CD4-positive, alpha-beta memory T cell (primary cell): ENCODE measurements at regions of chr20 and their contacts with region 1.

Region 1: DNA sequence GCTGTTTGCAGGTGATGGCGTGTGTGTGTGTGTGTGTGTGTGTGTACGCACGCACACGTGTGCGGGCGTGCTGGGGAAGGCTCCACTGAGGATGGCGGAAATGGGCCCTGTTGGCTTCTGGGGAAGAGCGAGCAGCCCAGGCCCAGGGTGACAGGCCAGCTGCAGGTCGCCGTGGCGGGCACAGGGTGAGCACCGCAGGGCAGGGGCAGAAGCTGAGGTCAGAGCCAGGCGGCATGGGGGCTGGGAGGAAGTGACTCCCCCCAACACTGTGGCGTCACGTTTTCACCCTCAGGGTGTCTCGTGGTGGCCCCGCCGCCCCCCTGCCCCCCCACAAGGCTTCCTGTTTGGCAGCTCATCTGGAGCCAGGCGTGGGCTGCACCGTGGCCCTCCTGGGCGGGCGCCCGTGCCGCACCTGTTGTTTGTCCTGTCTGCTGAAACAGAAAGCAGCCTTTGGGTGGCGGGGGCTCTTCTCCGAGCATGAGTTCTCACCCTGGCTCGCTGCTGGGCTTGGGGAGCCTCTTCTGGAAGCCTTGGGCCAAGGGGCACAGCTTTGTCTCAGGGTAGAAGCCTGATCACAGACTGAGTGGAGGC is 7.1 kb downstream of the RBM38 start:
- DNase-seq: peak; percentile 92 to 97 (median 94)
- H3K4me3 ChIP-seq: peak overlapping the region; percentile 43 to 74
- H3K4me3 Mint-ChIP-seq: peak overlapping the region; percentile 80 to 91 (median 84)
- H3K27ac ChIP-seq: peak overlapping the region; percentile 90
- H3K27ac Mint-ChIP-seq: peak overlapping the region; percentile 97 to 100 (median 99)
- H3K4me1 ChIP-seq: peaks cover 97% of the 10 kb centered on the region
- H3K4me1 Mint-ChIP-seq: peaks cover 52 to 96% (median 76%) of the 10 kb centered on the region in 4 donors
- H3K27me3 ChIP-seq: no peaks in the 10 kb centered on the region
- H3K27me3 Mint-ChIP-seq: peaks cover 0 to 3% of the 10 kb centered on the region in 2 donors

Region 2: DNA sequence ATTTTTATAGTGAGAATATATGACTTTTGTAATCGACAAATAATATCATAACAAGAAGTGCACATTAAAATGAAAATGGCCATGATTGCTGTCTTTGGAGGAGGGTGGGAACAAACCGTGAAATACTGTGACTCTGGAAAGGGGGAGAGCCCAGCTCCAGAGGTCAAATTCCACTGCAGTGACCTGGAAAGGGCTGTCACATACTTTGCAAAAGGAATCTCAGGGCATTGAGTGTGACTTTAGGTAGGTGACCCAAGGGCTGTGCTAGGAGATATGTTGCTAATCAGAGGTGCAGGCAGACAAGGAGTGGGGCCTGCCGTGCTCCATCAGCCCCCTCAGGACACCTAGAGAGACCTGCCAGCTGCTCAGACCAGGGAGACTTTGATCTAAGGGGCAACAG is 103.8 kb before region 1 on chr20:
- CTCF ChIA-PET with region 1: no interaction called
- POLR2A ChIA-PET with region 1: no interaction called
- intact Hi-C with region 1: no loop called
- DNase-seq: no peak
- H3K4me3 ChIP-seq: no peak overlapping the region
- H3K4me3 Mint-ChIP-seq: no peak overlapping the region
- H3K27ac ChIP-seq: no peak overlapping the region
- H3K27ac Mint-ChIP-seq: no peak overlapping the region
- H3K4me1 ChIP-seq: no peaks in the 10 kb centered on the region
- H3K4me1 Mint-ChIP-seq: no peaks in the 10 kb centered on the region
- H3K27me3 ChIP-seq: no peaks in the 10 kb centered on the region
- H3K27me3 Mint-ChIP-seq: peaks cover 22 to 27% of the 10 kb centered on the region in 2 donors

Region 3: DNA sequence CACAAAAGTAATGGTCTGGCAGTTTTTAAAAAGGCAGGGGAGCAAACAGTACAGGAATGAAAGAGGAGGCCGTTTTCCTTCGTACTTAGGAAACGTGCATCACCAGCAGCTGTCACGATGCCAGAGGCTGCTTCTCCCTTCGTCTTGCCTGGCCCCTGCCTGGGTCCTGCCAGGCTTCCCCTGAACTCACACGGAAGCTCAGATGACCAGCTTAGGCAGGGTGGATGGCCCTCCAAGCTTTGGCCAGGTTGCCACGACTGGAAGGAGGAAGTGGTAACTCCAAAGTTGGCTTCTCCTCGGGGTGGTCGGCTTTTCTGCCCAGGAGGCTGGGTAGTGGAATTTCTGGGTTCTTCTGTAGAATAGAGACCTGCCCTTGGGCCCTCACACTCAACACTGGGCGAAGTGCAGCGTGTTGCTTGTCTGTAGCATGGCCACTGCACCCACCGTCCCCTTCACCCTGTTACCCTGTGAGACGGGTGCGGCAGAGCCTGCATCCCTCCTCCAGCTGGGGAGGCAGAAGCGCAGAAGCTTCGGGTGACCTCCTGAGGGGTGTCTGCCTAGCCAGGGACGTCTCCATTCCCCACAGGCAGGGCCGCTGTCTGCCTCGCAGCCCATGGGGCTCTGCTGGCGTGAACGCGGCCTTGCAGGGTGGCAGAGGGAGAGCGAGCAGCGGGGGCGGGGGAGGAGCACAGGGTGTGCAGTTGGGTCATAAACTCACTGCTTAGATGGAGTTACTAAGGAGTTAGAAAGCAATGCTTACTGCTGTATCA is 25.6 kb before region 1 on chr20:
- CTCF ChIA-PET with region 1: no interaction called
- POLR2A ChIA-PET with region 1: no interaction called
- intact Hi-C with region 1: no loop called
- DNase-seq: no peak
- H3K4me3 ChIP-seq: no peak overlapping the region
- H3K4me3 Mint-ChIP-seq: no peak overlapping the region
- H3K27ac ChIP-seq: no peak overlapping the region
- H3K27ac Mint-ChIP-seq: peak overlapping the region in 1 of 7 donors; percentile 69
- H3K4me1 ChIP-seq: peaks cover 4% of the 10 kb centered on the region
- H3K4me1 Mint-ChIP-seq: peaks cover 9 to 34% (median 13%) of the 10 kb centered on the region in 4 donors
- H3K27me3 ChIP-seq: no peaks in the 10 kb centered on the region
- H3K27me3 Mint-ChIP-seq: no peaks in the 10 kb centered on the region

Region 4: GRCh38 chr20:57383447-57384347 is 14.6 kb before region 1 on chr20:
- CTCF ChIA-PET with region 1: interaction called, 45 read pairs
- POLR2A ChIA-PET with region 1: interaction called, 150 read pairs
- intact Hi-C with region 1: no loop called
- DNase-seq: no peak
- H3K4me3 ChIP-seq: no peak overlapping the region
- H3K4me3 Mint-ChIP-seq: no peak overlapping the region
- H3K27ac ChIP-seq: no peak overlapping the region
- H3K27ac Mint-ChIP-seq: peak overlapping the region in 2 of 7 donors; percentile 53 to 63
- H3K4me1 ChIP-seq: peaks cover 18% of the 10 kb centered on the region
- H3K4me1 Mint-ChIP-seq: peaks cover 12 to 27% (median 20%) of the 10 kb centered on the region in 4 donors
- H3K27me3 ChIP-seq: no peaks in the 10 kb centered on the region
- H3K27me3 Mint-ChIP-seq: no peaks in the 10 kb centered on the region

Region 5: DNA sequence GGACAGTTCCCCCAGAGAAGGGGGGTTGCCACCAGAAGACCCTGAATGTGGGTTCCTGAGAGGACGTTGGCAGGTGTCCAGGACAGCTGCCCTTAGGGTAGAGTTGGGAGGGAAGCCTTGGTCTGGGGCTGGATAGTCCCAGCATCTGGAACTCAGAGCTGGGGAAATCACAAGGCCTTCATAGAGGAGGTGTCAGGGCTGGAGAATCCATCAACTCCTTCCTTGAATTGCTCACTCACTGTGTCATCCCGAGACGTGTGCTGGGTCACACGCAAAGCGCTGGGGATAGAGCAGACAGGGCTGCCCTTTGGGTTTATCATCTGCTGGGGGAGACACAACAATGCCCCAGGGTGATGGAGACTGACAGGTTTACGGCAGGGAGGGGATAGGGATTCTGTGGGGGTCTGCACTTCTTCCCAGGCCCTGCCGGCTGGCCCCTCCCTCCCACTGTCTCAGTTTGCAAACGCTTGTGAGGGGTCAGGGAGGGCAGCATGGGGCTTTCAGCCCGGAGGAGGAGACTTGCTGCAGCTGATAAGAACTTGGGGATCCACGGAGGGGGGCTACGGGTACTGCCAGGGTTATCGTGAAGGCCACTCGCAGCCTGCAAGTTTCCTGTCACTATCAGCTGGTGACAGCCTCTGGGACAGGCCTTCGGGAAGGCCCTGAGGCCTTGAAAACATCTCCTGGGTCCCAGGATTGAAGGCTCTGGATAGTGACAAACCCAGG is 11.5 kb after region 1 on chr20:
- CTCF ChIA-PET with region 1: interaction called, 4 read pairs
- POLR2A ChIA-PET with region 1: interaction called, 150 read pairs
- intact Hi-C with region 1: no loop called
- DNase-seq: peak in 1 of 5 donors; percentile 27
- H3K4me3 ChIP-seq: no peak overlapping the region
- H3K4me3 Mint-ChIP-seq: peak overlapping the region in 1 of 8 donors; percentile 39
- H3K27ac ChIP-seq: no peak overlapping the region
- H3K27ac Mint-ChIP-seq: peak overlapping the region in 5 of 7 donors; percentile 29 to 90 (median 84)
- H3K4me1 ChIP-seq: peaks cover 25% of the 10 kb centered on the region
- H3K4me1 Mint-ChIP-seq: peaks cover 9 to 22% (median 16%) of the 10 kb centered on the region in 4 donors
- H3K27me3 ChIP-seq: no peaks in the 10 kb centered on the region
- H3K27me3 Mint-ChIP-seq: no peaks in the 10 kb centered on the region

Region 6: DNA sequence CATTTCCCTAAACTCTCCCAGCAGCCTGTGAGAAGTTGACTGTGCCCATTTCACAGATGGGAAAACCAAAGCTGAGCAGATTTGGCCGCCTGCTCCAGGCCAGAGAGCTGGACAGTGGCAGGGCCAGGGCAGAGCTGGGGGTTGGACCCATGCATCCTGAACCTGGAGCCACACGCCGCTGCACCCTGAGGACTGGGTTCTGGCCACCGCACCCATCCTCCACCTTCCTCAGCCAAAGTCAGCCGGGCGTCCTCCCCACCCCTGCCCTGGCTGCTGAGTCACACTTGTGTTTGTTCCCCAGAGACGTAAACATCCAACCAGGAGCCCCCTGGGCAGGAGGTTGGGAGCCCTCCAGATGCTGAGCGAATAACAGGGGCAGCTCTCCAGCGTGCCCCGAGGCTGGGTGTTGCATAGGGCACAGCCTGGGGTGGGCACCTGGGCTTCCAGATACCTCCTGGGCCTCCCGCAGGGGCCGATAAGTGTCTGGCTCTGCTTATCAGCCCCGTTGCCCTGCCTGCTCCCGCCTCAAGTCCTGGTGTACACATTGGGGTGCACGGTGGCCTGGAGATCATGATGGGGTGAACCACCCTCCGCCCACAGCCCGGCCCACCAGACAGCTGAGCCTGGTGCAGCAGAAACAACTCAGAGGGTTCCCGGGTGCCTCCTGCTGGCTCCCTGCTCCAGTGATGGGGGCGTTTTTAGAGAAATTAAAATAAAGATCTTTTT is 16.7 kb after region 1 on chr20:
- CTCF ChIA-PET with region 1: interaction called, 4 read pairs
- POLR2A ChIA-PET with region 1: interaction called, 26 read pairs
- intact Hi-C with region 1: no loop called
- DNase-seq: no peak
- H3K4me3 ChIP-seq: no peak overlapping the region
- H3K4me3 Mint-ChIP-seq: no peak overlapping the region
- H3K27ac ChIP-seq: no peak overlapping the region
- H3K27ac Mint-ChIP-seq: peak overlapping the region in 1 of 7 donors; percentile 50
- H3K4me1 ChIP-seq: peaks cover 20% of the 10 kb centered on the region
- H3K4me1 Mint-ChIP-seq: peaks cover 10 to 19% (median 14%) of the 10 kb centered on the region in 4 donors
- H3K27me3 ChIP-seq: no peaks in the 10 kb centered on the region
- H3K27me3 Mint-ChIP-seq: no peaks in the 10 kb centered on the region

Region 7: DNA sequence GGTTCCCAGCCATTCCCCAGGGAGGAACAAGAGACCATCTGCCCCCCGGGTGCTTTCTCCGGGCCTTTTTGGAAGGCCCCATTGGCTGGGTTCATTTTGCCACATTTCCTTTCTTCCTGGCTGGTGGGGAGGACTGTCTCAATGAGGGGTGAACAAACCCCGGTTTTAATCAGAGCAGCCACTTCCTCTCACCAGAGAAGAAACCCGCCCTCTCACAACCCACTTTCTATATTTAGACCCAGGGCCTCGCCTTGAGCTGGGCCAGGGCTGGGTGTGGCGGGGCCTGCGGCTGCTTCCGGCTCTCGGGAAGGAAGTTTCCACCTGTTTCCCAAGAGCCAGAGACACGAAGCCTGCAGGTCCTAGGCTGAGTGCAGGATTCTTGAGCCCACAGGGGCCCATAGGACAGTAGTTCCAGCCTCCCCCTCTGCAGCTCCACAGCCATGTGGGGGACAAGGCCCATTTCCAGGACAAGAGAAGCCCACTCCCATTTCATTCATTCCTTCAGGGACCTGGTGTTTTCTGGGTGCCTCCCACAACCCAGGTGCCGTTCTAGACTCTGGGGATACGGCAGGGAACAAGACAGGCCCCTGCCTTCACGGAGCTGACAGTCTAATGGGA is 34.7 kb after region 1 on chr20:
- CTCF ChIA-PET with region 1: interaction called, 92 read pairs
- POLR2A ChIA-PET with region 1: interaction called, 117 read pairs
- intact Hi-C with region 1: loop called (anchors 1 kb)
- DNase-seq: peak; percentile 72 to 81 (median 77)
- H3K4me3 ChIP-seq: peak overlapping the region in 1 of 2 donors; percentile 44
- H3K4me3 Mint-ChIP-seq: peak overlapping the region; percentile 71 to 89 (median 78)
- H3K27ac ChIP-seq: peak overlapping the region; percentile 43
- H3K27ac Mint-ChIP-seq: peak overlapping the region; percentile 83 to 95 (median 92)
- H3K4me1 ChIP-seq: peaks cover 65% of the 10 kb centered on the region
- H3K4me1 Mint-ChIP-seq: peaks cover 39 to 70% (median 61%) of the 10 kb centered on the region in 4 donors
- H3K27me3 ChIP-seq: no peaks in the 10 kb centered on the region
- H3K27me3 Mint-ChIP-seq: no peaks in the 10 kb centered on the region

Region 8: DNA sequence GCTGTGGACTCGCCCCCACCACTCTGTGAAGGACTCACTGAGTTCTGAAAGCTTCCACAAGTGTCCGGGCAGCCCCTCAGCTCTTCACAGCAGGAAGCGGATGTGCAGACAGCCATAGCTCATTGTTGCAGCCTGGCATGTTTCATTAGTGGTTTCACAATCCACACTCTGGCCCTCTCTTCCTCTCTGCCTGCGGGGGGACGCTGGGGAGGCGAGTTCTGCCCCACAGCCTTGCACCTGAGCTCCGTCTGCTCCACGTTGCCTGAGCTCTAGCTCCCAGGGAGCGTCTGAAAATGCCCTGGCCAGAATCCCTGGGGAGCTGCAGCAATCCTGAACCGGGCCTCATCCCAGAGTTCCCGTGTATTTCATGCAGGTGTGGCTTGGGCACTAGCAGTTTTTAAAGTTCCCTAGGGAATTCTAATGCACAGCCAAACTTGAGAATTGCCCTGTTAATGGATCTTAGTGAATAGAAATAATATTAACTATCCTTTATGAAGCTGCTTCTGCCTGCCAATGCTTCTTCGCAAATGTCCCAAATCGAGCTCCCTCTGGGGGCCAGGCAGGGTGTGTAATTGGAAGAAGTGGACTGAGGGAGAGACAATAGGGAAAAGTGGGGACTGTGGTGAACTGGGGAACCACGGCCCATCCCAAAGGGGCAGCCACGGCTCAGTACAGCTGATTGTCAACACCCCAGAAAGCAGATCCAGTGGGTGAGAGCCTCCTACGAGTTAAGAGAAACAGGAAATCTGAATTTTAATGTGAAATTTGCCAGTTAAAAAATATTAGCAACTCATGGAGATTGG is 75.1 kb after region 1 on chr20:
- CTCF ChIA-PET with region 1: interaction called, 3 read pairs
- POLR2A ChIA-PET with region 1: interaction called, 11 read pairs
- intact Hi-C with region 1: no loop called
- DNase-seq: no peak
- H3K4me3 ChIP-seq: no peak overlapping the region
- H3K4me3 Mint-ChIP-seq: peak overlapping the region in 2 of 8 donors; percentile 37 to 48
- H3K27ac ChIP-seq: no peak overlapping the region
- H3K27ac Mint-ChIP-seq: peak overlapping the region in 2 of 7 donors; percentile 18 to 80
- H3K4me1 ChIP-seq: peaks cover 16% of the 10 kb centered on the region
- H3K4me1 Mint-ChIP-seq: peaks cover 7 to 26% (median 9%) of the 10 kb centered on the region in 4 donors
- H3K27me3 ChIP-seq: no peaks in the 10 kb centered on the region
- H3K27me3 Mint-ChIP-seq: peaks cover 0 to 1% of the 10 kb centered on the region in 2 donors

Region 9: GRCh38 chr20:58309575-58310290 is 911.4 kb after region 1 on chr20 and contains the start of gene RAB22A:
- CTCF ChIA-PET with region 1: no interaction called
- POLR2A ChIA-PET with region 1: no interaction called
- intact Hi-C with region 1: loop called (anchors 2 kb)
- DNase-seq: peak; percentile 77 to 88 (median 83)
- H3K4me3 ChIP-seq: peak within 1 kb of the TSS; percentile 62 to 72
- H3K4me3 Mint-ChIP-seq: peak within 1 kb of the TSS; percentile 88 to 98 (median 94)
- H3K27ac ChIP-seq: peak within 1 kb of the TSS; percentile 87
- H3K27ac Mint-ChIP-seq: peak within 1 kb of the TSS; percentile 95 to 99 (median 99)
- H3K4me1 ChIP-seq: peaks cover 68% of the 10 kb centered on the region
- H3K4me1 Mint-ChIP-seq: peaks cover 40 to 71% (median 56%) of the 10 kb centered on the region in 4 donors
- H3K27me3 ChIP-seq: no peaks in the 10 kb centered on the region
- H3K27me3 Mint-ChIP-seq: no peaks in the 10 kb centered on the region
- total RNA-seq, gene RAB22A: 23.6 TPM